Left ventricle myocardium superior (tissue), 1 donor: ENCODE measurements at regions of chr1 and their contacts with region 1.

Region 1: GRCh38 chr1:209692745-209693504 is 11.7 kb upstream of the HSD11B1 start:
- DNase-seq: peak; percentile 72
- ATAC-seq: peak; percentile 58

Region 2: GRCh38 chr1:209576798-209577197 is 116.1 kb before region 1 on chr1:
- intact Hi-C with region 1: loop called (anchors 5 kb)
- DNase-seq: peak; percentile 85
- ATAC-seq: peak; percentile 97

Region 3: DNA sequence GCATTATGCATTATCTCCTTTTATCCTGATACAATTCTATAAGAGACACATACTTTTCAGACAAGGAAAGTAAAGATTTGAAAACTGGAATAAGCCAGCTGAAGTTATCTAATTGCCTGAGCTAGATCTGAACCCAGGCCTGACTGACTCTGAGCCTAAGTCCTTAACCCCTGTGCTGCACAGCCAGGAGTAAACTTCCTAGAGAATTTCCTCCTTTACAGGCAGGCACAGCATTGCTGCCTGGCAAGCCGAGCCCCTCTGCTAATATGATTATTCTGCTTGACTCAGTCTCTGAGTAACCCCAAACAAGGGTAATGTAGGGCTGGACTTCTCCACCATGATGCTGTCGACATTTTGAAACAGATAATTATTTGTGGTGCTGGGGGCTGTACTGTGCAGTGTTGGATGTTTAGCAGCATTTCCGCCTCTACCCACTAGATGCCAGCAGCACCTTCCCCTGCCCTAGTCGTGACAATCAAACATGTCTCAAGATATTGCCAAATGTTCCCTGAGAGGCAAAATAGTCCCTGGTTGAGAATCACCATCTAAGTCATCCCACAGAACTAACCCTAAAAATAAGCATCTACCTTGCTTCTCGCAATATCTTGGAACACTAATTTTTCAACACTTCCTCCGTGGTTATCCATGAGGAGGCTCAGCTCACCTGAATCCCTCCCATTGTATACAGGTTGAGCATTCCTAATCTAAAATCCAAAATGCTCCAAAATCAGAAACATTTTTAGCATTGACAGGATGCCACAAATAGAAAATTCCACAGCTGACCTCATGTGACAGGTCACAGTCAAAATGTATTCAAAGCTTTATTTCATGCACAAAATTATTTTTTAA is 90.9 kb before region 1 on chr1:
- intact Hi-C with region 1: loop called (anchors 5 kb)
- DNase-seq: no peak
- ATAC-seq: peak; percentile 89

Region 4: GRCh38 chr1:209643285-209644020 is 49.5 kb before region 1 on chr1:
- intact Hi-C with region 1: loop called (anchors 5 kb)
- DNase-seq: peak; percentile 86
- ATAC-seq: peak; percentile 80

Region 5: DNA sequence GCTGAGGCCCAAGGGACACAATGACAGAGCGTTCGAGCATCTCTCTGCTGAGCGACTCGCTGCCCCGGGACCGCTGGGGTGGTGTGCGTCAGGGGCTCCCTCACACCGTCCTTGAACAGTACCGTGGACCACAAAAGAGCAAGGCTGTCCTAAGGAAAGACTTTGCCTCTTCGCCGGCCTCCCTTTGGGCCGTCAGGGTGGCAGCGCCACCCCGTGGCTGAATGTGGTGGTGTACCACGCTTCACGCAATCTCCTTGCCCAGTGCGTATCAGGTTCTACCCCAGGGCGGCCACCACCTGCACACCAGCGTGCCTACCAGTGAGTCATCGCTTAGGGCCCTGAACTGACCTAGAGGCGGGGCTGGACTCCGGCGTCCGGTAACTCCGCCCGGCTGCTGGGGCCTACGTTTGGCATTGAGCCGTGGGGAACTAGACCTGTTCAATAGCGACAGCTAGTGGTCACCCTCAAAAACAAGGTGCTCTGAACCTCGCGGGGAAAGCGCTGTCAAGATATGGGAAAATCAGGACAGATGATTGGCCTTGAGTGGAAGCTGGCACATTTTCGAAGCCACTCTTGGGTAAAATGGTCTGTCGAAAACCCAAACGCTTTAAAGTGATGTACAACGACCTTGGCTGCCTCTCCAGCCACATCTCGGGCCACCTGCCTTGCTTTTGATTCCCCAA is 54.8 kb after region 1 on chr1:
- intact Hi-C with region 1: loop called (anchors 10 kb)
- DNase-seq: peak; percentile 92
- ATAC-seq: peak; percentile 96